ENCODE measurements at regions of chr17 and their contacts with region 1.

Region 1: GRCh38 chr17:6843241-6843880 is 11.8 kb upstream of the TEKT1 start:
- DNase-seq: no peak
- H3K4me3 Mint-ChIP-seq: no peak overlapping the region
- H3K27ac Mint-ChIP-seq: no peak overlapping the region
- H3K4me1 Mint-ChIP-seq: peaks cover 13% of the 10 kb centered on the region
- H3K27me3 Mint-ChIP-seq: peaks cover 46% of the 10 kb centered on the region

Region 2: DNA sequence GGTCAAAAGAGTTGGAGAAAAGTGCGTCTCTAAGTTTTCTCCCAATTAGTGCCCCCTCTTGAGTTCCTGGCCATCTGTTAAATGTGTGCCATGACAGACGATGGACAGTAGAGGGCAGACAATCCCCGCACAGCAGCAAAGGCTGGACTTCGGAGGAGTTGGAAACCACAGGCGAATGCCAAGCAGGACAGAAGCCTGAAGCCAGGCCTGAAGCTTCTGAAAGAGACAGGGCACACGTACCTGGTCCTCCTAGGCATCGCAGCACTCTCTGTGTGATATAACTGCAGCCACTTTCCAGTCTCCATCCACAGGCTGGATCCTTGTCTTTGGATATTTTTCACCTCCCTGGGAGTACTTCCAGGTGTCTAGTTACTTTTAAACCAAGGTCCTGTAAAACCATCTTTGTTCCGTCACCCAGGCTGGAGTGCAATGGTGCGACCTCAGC is 177.3 kb before region 1 on chr17:
- intact Hi-C with region 1: loop called (anchors 1 kb)
- DNase-seq: no peak
- H3K4me3 Mint-ChIP-seq: no peak overlapping the region
- H3K27ac Mint-ChIP-seq: no peak overlapping the region
- H3K4me1 Mint-ChIP-seq: peaks cover 13% of the 10 kb centered on the region
- H3K27me3 Mint-ChIP-seq: peaks cover 13% of the 10 kb centered on the region

Region 3: GRCh38 chr17:6831661-6832263 is 11.6 kb before region 1 on chr17 and contains the start of gene TEKT1:
- intact Hi-C with region 1: no loop called
- DNase-seq: peak; percentile 66
- H3K4me3 Mint-ChIP-seq: peak within 1 kb of the TSS; percentile 71
- H3K27ac Mint-ChIP-seq: peak within 1 kb of the TSS; percentile 23
- H3K4me1 Mint-ChIP-seq: peaks cover 9% of the 10 kb centered on the region
- H3K27me3 Mint-ChIP-seq: peaks cover 59% of the 10 kb centered on the region
- total RNA-seq, gene TEKT1: not detected in 2 replicates

Region 4: GRCh38 chr17:6894206-6894528 is 50.8 kb after region 1 on chr17:
- intact Hi-C with region 1: loop called (anchors 5 kb)
- DNase-seq: no peak
- H3K4me3 Mint-ChIP-seq: no peak overlapping the region
- H3K27ac Mint-ChIP-seq: no peak overlapping the region
- H3K4me1 Mint-ChIP-seq: no peaks in the 10 kb centered on the region
- H3K27me3 Mint-ChIP-seq: peaks cover 39% of the 10 kb centered on the region

Region 5: GRCh38 chr17:6913608-6914443 is 70.5 kb after region 1 on chr17:
- intact Hi-C with region 1: loop called (anchors 5 kb)
- DNase-seq: peak; percentile 48
- H3K4me3 Mint-ChIP-seq: peak overlapping the region; percentile 76
- H3K27ac Mint-ChIP-seq: no peak overlapping the region
- H3K4me1 Mint-ChIP-seq: peaks cover 33% of the 10 kb centered on the region
- H3K27me3 Mint-ChIP-seq: peaks cover 18% of the 10 kb centered on the region

Region 6: DNA sequence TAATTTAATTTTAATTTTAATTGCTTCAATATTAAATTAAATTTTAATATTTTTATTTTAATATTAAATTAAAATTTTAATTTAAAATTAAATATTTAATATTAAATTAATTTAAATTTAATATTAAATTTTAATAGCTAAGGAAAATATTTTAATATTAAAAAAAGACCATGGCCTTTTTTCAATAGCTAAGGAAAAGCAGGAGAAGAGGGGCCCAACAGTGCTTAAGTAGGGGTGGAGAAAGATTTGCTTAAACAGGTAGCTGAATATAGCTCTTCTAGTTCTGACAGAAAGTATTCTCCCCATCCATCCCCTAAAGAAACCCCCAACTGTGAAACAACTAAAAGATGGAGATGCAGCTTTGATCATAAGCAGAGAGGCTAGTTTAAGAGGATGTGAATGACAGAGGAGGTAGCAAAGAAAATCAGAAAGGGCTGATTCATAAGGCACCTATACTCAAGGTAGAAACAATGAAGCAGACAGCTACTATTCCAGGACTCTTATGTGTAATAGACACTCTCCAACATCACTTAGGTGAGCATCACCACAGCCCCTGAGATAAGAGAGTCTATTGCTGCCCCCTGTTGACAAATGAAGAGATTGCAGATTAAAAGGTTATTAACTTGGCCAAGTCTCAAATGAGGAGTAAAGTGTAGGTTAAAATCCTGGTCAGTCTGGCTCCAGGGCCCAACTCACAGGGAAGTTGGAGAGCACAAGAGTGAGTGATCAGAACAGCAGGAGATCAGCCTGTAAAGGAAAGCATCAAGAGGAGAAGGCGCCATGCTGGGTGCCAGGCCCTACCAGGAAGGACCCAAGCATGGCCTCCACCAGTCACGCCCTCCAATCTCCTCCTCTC is 161.3 kb after region 1 on chr17:
- intact Hi-C with region 1: loop called (anchors 1 kb)
- DNase-seq: peak; percentile 48
- H3K4me3 Mint-ChIP-seq: no peak overlapping the region
- H3K27ac Mint-ChIP-seq: peak overlapping the region; percentile 63
- H3K4me1 Mint-ChIP-seq: peaks cover 25% of the 10 kb centered on the region
- H3K27me3 Mint-ChIP-seq: no peaks in the 10 kb centered on the region

Region 7: DNA sequence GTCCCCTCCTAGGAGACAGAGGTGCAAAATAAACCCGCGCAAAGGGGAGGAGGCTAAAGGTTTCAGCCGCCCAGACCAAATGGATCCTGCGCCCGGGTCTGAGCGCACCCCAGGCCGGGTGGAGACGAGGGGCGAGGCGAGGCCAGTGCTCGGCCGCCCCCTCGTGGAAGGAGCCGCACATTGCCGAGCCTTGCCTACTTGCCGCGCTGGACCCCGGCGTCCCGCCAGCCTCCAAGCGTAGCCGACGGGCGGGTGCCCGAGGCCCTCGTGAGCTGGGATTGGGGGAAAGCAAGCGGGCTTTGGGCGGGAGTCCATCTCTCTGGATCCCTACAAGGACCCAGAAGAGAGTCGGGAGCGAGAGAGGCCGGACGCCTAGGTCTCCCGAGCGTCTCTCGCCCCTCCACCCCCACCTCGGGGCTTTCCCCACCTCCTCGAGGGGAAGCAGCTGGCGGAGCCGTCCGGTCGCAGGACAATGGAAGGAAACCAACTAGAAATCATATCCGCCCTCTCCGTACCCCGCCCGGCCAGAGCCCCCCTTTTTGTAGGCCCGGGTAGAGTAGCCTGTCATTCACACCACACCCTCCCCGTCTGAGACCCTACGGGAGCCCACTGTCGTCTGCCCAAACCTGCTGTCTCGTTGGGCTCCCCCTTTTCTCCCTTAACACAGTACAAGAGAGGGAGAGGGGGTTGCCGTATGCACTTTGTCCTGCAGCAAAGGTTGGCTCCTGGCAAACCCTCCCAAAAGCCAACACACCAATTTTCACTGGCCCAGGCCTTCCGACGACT is 178.8 kb after region 1 on chr17:
- intact Hi-C with region 1: loop called (anchors 5 kb)
- DNase-seq: peak; percentile 78
- H3K4me3 Mint-ChIP-seq: peak overlapping the region; percentile 74
- H3K27ac Mint-ChIP-seq: peak overlapping the region; percentile 87
- H3K4me1 Mint-ChIP-seq: peaks cover 68% of the 10 kb centered on the region
- H3K27me3 Mint-ChIP-seq: peaks cover 3% of the 10 kb centered on the region

Region 8: DNA sequence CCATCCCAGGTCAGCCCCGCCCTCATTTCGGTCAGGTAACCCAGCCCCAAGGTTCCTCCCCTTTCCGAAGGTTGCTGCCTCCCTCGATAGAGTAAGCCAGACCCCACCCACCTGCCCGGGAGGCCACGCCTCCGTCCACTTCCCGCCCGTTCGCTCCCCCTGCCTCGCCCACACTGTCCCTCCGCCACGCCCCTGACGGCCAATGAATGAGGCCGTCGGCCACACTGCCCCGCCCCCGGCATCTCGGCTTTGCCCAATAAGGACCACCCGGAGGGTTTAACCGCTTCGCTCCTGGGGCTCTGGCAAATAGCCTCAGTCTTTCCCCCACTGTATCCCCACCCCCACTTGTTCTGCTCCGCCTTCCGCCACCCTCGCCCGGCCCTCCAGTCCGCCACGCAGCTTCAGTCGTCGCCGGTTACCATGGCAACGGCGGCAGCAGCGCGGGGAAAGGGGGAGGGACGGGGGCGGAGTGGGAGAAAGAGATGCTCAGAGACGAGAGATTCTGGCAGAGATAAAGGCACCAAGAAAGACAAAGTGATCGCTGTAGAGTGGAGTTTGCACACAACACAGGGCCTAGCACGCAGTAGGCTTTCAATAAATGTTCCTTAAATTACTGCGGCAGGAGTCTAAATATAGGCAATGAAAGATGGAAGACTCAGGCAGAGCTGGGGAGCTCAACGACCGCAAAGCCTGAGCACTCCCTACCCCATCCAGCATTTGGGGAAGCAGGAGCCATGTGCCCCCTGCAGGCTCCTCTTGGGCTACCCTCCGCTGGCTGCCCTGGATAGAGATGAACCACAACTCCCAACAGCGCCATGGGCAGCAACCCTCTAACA is 371.2 kb after region 1 on chr17:
- intact Hi-C with region 1: no loop called
- DNase-seq: peak; percentile 99
- H3K4me3 Mint-ChIP-seq: peak overlapping the region; percentile 91
- H3K27ac Mint-ChIP-seq: peak overlapping the region; percentile 98
- H3K4me1 Mint-ChIP-seq: peaks cover 55% of the 10 kb centered on the region
- H3K27me3 Mint-ChIP-seq: peaks cover 14% of the 10 kb centered on the region